Testis (tissue), 5 donors: ENCODE measurements at regions of chr2 and their contacts with region 1.

Region 1: GRCh38 chr2:182077451-182078142 is 91.9 kb downstream of the PPP1R1C start:
- DNase-seq: peak; percentile 52
- H3K4me3 ChIP-seq: no peak overlapping the region
- H3K27ac ChIP-seq: no peak overlapping the region
- H3K4me1 ChIP-seq: no peaks in the 10 kb centered on the region
- H3K27me3 ChIP-seq: no peaks in the 10 kb centered on the region
- CTCF ChIP-seq: peak; percentile 56 to 70 (median 63)
- POLR2A ChIP-seq: no peak

Region 2: GRCh38 chr2:181752301-181752700 is 325.3 kb before region 1 on chr2:
- intact Hi-C with region 1: loop called (anchors 10 kb)
- DNase-seq: no peak
- H3K4me3 ChIP-seq: no peak overlapping the region
- H3K27ac ChIP-seq: peak overlapping the region; percentile 29 to 55
- H3K4me1 ChIP-seq: peaks cover 10% of the 10 kb centered on the region
- H3K27me3 ChIP-seq: no peaks in the 10 kb centered on the region
- CTCF ChIP-seq: no peak
- POLR2A ChIP-seq: no peak